PC-3 (cell line): ENCODE measurements at regions of chr14 and their contacts with region 1.

Region 1: GRCh38 chr14:73026845-73027542 is at the start of gene ZFYVE1:
- DNase-seq: peak; percentile 100
- ATAC-seq: peak; percentile 99
- H3K4me3 ChIP-seq: peak within 1 kb of the TSS; percentile 81
- H3K27ac ChIP-seq: no peak within 1 kb of the TSS
- H3K4me1 ChIP-seq: peaks cover 18% of the 10 kb centered on the region
- H3K27me3 ChIP-seq: no peaks in the 10 kb centered on the region
- CTCF ChIP-seq: no peak
- total RNA-seq, gene ZFYVE1: 10.5 and 13.0 TPM in 2 replicates

Region 2: DNA sequence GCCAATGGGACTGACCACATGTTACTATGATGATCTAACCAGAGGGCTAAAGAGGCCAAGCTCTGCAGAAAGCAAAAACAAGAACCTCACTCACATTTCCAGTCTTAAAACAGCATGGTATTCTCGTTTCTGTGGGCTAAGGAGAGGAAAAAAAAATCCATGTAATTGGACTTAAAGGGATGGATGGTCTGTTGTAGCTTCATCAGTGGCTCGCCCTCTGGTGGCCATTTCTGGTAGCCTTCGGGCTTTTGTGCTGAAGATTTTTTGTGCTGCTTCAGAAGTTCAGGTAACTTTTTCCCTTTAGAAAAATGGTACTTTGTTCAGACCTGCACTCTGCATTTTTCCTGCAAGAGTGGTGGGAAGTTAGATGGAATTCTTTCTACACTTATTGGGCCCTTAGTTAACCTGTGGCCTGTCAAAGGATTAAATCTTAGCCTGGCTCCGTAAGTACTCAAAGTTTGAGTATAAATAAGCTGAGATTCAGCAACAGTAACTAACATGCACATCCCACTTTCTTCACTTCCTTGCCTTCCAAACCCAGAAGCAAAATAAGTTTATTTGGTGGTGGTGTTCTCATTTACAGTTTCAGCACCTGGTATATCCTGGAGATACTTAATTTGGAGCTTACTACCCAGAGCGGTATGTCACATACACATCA is 78.4 kb before region 1 on chr14:
- CTCF ChIA-PET with region 1: interaction called, 14 read pairs
- POLR2A ChIA-PET with region 1: interaction called, 3 read pairs
- intact Hi-C with region 1: no loop called
- DNase-seq: peak; percentile 86
- ATAC-seq: peak; percentile 38
- H3K4me3 ChIP-seq: no peak overlapping the region
- H3K27ac ChIP-seq: no peak overlapping the region
- H3K4me1 ChIP-seq: peaks cover 17% of the 10 kb centered on the region
- H3K27me3 ChIP-seq: no peaks in the 10 kb centered on the region
- CTCF ChIP-seq: peak; percentile 99

Region 3: DNA sequence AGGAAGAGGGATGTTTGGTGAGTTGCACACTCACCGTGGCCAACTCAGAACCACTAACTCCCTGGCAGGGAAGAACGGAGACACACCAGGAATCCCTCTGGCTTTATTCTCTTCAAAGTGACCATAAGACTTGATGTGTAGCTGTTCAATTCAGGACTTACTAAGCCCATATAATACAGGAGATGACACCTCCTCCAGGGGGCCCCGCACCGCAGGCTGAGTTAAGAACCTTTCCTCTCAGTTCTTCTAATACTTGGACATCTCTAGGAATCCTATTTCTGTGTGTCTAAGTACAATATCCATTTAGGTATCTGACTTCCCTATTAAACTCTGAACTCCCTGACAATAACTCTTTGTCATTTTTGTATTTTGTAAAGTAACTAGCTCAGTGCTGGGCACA is 51.2 kb before region 1 on chr14:
- CTCF ChIA-PET with region 1: interaction called, 12 read pairs
- POLR2A ChIA-PET with region 1: no interaction called
- intact Hi-C with region 1: no loop called
- DNase-seq: peak; percentile 40
- ATAC-seq: peak; percentile 69
- H3K4me3 ChIP-seq: no peak overlapping the region
- H3K27ac ChIP-seq: no peak overlapping the region
- H3K4me1 ChIP-seq: no peaks in the 10 kb centered on the region
- H3K27me3 ChIP-seq: no peaks in the 10 kb centered on the region
- CTCF ChIP-seq: peak; percentile 73

Region 4: DNA sequence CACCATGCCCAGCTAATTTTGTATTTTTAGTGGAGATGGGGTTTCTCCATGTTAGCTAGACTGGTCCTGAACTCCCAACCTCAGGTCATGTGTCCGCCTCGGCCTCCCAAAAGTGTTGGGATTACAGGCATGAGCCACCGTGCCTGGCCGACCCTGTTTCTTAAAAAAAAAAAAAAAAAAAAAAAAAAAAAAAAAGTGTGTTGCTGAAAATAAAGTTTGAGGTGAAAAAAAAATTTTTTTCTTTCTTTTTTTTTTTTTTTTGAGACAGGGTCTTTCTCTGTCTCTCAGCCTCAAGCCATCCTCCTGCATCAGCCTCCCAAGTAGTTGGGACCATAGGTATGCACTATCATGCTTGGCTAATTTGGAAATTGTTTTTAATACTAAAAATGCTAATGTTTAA is 42.6 kb after region 1 on chr14:
- CTCF ChIA-PET with region 1: no interaction called
- POLR2A ChIA-PET with region 1: interaction called, 5 read pairs
- intact Hi-C with region 1: loop called (anchors 5 kb)
- DNase-seq: no peak
- ATAC-seq: no peak
- H3K4me3 ChIP-seq: no peak overlapping the region
- H3K27ac ChIP-seq: no peak overlapping the region
- H3K4me1 ChIP-seq: peaks cover 9% of the 10 kb centered on the region
- H3K27me3 ChIP-seq: no peaks in the 10 kb centered on the region
- CTCF ChIP-seq: no peak

Region 5: GRCh38 chr14:73198253-73198652 is 171.3 kb after region 1 on chr14:
- CTCF ChIA-PET with region 1: no interaction called
- POLR2A ChIA-PET with region 1: no interaction called
- intact Hi-C with region 1: no loop called
- DNase-seq: no peak
- ATAC-seq: no peak
- H3K4me3 ChIP-seq: no peak overlapping the region
- H3K27ac ChIP-seq: no peak overlapping the region
- H3K4me1 ChIP-seq: no peaks in the 10 kb centered on the region
- H3K27me3 ChIP-seq: no peaks in the 10 kb centered on the region
- CTCF ChIP-seq: no peak